Activated CD8-positive, alpha-beta T cell treated with anti-CD3 and anti-CD28 coated beads, Interleukin-2, amount 10 ng/mL, durations not matched to agents 7 days and 5 days (primary cell): ENCODE measurements at regions of chr11 and their contacts with region 1.

Region 1: GRCh38 chr11:112280268-112281126 is 19.8 kb upstream of the PLET1 start:
- DNase-seq: peak; percentile 81
- ATAC-seq: peak; percentile 89
- H3K4me3 Mint-ChIP-seq: peak overlapping the region; percentile 87
- H3K27ac Mint-ChIP-seq: peak overlapping the region; percentile 82
- H3K4me1 Mint-ChIP-seq: peaks cover 35% of the 10 kb centered on the region
- H3K27me3 Mint-ChIP-seq: no peaks in the 10 kb centered on the region

Region 2: GRCh38 chr11:112113539-112114457 is 166.7 kb before region 1 on chr11:
- CTCF ChIA-PET with region 1: interaction called, 52 read pairs
- POLR2A ChIA-PET with region 1: no interaction called
- DNase-seq: no peak
- ATAC-seq: peak; percentile 74
- H3K4me3 Mint-ChIP-seq: no peak overlapping the region
- H3K27ac Mint-ChIP-seq: no peak overlapping the region
- H3K4me1 Mint-ChIP-seq: peaks cover 32% of the 10 kb centered on the region
- H3K27me3 Mint-ChIP-seq: no peaks in the 10 kb centered on the region

Region 3: DNA sequence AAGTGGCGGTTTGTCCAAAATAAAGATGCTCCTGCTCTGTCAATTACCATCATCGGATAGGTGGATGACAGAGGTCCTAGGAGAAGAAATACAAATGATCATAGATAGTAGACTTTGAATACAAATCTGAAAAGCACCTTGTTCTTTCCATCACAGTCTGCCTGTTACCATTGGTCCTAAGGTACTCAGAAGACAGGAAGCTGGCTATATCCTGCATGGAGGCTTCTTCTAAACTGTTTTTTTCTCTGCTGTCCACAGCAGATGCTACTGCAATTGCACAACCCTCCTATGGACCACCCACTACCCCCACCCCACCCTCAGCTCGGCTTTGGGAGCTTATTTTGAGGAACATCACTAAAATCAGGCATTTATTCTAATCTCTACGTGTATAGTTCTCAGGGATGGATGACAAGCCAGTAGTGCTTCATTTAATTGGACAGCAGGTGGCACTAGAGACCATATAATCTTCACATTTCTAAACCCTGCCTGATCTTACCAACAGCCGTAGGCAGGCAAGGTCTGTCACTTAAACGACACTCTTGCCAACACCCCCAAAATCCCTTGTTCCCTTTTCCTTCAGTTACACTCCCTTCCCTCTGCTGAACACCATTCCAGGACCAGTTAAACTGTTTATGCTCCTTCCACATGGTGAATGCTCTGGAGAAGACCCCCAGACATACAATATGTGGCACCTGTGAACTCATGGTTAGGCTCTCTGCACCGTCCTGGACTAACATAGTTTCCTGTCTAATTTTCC is 60.8 kb before region 1 on chr11:
- CTCF ChIA-PET with region 1: interaction called, 264 read pairs
- POLR2A ChIA-PET with region 1: interaction called, 4 read pairs
- DNase-seq: peak; percentile 63
- ATAC-seq: peak; percentile 97
- H3K4me3 Mint-ChIP-seq: no peak overlapping the region
- H3K27ac Mint-ChIP-seq: no peak overlapping the region
- H3K4me1 Mint-ChIP-seq: peaks cover 3% of the 10 kb centered on the region
- H3K27me3 Mint-ChIP-seq: no peaks in the 10 kb centered on the region

Region 4: GRCh38 chr11:112231952-112232351 is 48.5 kb before region 1 on chr11:
- CTCF ChIA-PET with region 1: interaction called, 264 read pairs
- POLR2A ChIA-PET with region 1: no interaction called
- DNase-seq: no peak
- ATAC-seq: no peak
- H3K4me3 Mint-ChIP-seq: no peak overlapping the region
- H3K27ac Mint-ChIP-seq: no peak overlapping the region
- H3K4me1 Mint-ChIP-seq: peaks cover 15% of the 10 kb centered on the region
- H3K27me3 Mint-ChIP-seq: no peaks in the 10 kb centered on the region

Region 5: DNA sequence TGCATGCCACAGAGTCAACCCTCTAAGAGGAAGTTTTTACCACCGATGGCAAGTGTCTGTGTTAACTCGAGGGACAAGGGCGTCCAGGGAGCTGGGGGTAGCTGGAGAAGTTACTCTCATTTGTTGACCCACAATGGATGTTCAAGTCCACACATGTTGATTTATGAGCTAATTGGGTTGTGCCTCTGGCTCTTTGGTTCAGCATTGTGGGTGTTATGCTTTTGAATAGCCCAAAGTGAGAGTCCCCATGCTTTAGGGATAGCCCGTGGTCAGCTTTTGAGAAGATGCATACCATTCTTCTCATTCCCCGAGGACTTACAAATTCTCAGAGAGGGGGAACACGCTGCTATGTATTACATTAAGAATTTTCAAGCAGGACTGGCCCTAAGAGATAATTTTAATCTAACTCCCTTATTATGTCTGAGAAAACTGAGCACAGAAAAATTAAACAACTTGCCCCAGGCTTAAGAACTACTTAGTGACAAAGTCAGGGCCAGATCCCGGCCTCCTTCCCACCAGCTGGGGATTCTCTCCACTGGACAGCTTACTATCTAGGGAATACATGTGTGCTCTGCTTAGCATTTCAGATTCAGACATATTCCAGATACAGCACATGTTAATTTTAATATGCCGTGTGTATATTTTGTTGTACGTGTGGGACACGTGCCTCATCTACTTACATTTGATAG is 14.6 kb before region 1 on chr11:
- CTCF ChIA-PET with region 1: interaction called, 29 read pairs
- POLR2A ChIA-PET with region 1: interaction called, 3 read pairs
- DNase-seq: no peak
- ATAC-seq: no peak
- H3K4me3 Mint-ChIP-seq: no peak overlapping the region
- H3K27ac Mint-ChIP-seq: no peak overlapping the region
- H3K4me1 Mint-ChIP-seq: no peaks in the 10 kb centered on the region
- H3K27me3 Mint-ChIP-seq: peaks cover 3% of the 10 kb centered on the region

Region 6: DNA sequence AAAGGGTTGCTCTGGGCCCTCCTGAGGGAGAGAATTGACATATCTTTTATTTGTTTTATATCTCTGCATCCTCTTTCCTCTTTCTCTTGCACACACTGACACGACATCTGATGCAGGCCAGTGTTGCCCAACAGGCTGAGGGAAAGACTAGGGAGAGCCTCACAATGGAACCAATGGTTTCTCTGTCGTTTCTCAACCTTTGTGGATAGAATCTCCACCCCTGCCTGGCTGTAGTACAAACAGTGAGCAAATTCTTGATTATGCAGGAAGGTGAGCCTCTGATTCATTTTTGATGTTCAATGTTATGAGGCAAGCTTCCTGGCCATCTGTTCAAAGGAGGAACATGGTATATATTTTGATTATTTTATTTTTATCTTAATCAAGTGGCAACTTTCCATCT is 29.9 kb after region 1 on chr11:
- CTCF ChIA-PET with region 1: no interaction called
- POLR2A ChIA-PET with region 1: no interaction called
- DNase-seq: no peak
- ATAC-seq: no peak
- H3K4me3 Mint-ChIP-seq: no peak overlapping the region
- H3K27ac Mint-ChIP-seq: no peak overlapping the region
- H3K4me1 Mint-ChIP-seq: no peaks in the 10 kb centered on the region
- H3K27me3 Mint-ChIP-seq: peaks cover 2% of the 10 kb centered on the region

Region 7: DNA sequence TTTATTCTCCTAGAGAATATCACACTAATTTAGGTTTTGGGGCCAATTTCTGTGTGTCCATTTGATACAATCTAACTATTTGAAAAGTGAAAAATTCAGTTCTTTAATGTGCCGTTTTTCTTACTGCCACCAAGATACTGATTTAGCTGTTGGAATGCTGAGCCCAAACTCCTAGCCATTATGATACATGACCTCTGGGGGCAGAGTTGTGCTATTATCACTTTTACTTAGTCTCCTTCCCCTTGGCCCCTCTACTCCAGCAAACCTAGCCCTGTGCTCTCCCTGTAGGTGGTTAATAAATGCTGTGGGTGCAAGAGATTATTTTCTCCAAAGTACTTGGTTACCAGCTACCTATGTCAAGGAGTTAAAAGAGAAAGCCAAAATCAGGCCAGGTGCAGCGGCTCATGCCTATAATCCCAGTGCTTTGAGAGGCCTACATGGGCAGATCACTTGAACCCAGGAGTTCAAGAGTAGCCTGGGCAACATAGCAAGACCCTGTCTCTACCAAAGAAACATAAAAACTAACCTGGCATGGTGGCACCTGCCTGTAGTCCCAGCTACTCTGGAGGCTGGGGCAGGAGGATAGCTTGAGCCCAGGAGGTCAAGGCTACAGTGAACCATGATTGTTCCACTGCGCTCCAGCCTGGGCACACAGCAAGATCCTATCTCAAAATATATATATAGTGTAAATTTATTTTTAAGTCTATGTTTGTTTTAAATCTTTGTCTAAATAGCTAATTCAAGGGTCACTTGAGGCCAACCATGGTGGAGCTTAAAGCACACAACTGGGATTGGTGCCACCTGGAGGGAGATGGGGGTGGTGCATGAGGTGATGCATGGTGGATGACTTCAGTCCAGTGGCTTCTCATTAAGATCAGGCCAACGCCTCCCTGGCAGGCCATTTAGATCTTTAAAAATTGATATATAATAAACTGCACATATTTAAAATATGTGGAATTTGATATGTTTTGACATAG is 173.4 kb after region 1 on chr11:
- CTCF ChIA-PET with region 1: interaction called, 12 read pairs
- POLR2A ChIA-PET with region 1: no interaction called
- DNase-seq: peak; percentile 60
- ATAC-seq: peak; percentile 57
- H3K4me3 Mint-ChIP-seq: no peak overlapping the region
- H3K27ac Mint-ChIP-seq: no peak overlapping the region
- H3K4me1 Mint-ChIP-seq: peaks cover 5% of the 10 kb centered on the region
- H3K27me3 Mint-ChIP-seq: peaks cover 11% of the 10 kb centered on the region

Region 8: GRCh38 chr11:112555491-112556364 is 275.2 kb after region 1 on chr11:
- CTCF ChIA-PET with region 1: interaction called, 13 read pairs
- POLR2A ChIA-PET with region 1: no interaction called
- DNase-seq: peak; percentile 66
- ATAC-seq: peak; percentile 76
- H3K4me3 Mint-ChIP-seq: no peak overlapping the region
- H3K27ac Mint-ChIP-seq: peak overlapping the region; percentile 37
- H3K4me1 Mint-ChIP-seq: no peaks in the 10 kb centered on the region
- H3K27me3 Mint-ChIP-seq: peaks cover 2% of the 10 kb centered on the region